HEK293T (cell line): ENCODE measurements at regions of chr10 and their contacts with region 1.

Region 1: DNA sequence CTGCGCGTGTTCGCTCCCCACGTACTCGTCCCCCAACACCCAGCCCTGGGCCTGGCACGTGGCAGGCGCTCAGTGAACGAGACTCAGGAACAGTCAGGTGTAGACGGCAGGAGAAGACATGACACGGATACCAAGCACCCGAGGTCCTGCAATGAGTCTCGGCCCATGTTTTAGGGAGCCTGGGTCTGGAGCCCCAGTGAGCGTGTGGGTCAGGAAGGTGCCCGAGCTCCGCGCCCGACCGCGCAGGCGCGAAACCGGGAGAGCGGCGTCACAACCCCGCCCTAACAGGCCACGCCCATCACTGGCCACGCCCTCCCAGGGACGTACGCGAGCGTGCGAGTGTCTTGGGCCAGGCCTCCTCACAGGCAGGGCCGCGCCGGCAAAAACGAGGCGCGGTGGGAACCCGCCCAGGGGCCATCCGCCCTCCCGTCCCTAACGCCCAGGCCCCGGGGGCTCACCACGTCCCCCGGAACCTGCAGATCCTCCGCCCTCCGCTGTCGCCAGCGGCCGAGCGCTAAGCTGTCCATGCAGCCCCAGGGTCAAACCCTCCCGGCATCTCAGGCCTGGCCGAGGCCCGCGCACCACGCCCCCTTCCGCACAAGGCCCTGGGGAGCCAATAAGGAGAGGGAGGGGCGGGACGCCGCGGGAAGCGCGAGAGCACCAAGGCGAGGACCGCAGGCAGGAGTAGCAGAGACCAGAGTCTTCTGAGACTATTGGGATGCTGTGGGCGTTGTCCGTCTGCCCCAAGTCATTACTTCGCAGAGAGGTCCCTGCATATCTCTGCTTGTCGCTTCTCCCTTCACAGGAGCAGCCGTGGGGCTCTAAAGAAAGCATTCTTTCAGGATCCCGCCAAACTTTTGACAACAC is at the start of gene C10orf143:
- DNase-seq: peak; percentile 97

Region 2: DNA sequence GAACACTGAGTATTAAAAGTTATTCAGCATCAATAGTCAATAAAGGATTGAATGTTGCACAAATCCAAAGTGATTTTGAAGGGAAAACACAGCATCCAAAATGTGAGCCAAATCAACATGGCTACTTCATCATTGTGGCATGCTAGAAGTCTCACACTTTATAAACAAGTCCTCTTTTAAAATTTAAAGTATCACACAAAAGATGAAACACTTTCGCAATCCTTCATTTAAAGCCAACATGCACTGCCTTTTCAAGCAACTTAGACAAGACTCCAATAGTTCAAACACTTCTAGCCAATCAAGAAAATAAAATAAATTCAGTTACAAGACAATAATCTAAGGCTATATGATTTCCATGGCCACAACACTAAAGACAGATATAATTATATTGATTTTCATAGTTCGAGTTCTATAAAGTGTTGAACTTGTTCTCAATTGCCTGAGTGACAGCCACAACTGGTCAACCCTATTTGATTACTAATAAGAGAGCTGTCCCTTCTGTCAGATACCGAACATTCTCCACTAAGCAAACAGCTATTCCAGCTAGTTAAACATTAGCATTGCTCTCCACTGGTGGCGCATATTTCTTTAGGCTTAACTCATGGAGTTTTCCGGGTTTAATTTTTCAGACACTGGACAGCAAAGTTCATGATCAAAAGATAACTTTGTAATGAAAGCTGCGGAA is 154.7 kb before region 1 on chr10:
- CTCF ChIA-PET with region 1: no interaction called
- POLR2A ChIA-PET with region 1: no interaction called
- DNase-seq: no peak

Region 3: DNA sequence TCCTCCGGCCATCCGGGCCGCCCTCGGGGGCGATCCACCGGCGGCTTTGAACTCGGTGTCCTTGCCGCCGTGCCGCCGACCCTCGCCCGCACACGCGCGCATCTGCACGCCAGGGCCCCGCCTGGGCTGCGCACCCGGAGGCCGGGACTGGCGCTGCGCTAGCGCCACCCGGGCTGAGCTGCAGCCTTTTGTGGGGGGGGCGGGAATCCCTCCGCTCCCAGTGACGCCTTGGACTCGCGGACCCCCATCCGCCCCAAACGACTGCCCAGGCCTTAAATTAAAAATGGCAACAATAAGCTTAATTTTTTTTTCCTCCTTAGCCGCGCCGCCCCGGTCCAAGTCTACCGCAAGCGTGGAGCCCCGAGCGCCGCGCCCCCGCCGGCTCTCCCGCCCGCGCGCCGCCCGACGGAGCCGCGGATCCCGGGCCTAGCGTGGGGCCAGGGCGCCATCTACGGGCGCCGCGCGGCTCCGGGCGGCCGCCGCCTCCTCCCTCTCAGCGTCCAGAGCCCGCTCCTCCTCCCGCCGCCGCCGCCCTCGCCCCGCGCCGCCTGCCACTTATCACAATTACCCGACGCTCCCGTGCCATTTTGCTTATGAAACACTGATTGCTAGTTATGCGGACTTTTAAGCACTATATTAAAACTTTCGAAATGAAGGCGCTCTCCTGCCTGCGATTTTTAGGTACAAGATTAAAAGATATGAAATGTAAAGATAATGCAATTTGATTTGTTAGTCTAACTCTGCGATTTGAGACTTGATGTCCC is 138.9 kb before region 1 on chr10:
- CTCF ChIA-PET with region 1: interaction called, 3 read pairs
- POLR2A ChIA-PET with region 1: interaction called, 20 read pairs
- DNase-seq: peak; percentile 89

Region 4: GRCh38 chr10:130079614-130080460 is 30.6 kb before region 1 on chr10:
- CTCF ChIA-PET with region 1: interaction called, 3 read pairs
- POLR2A ChIA-PET with region 1: interaction called, 16 read pairs
- DNase-seq: peak; percentile 33

Region 5: GRCh38 chr10:130099344-130099743 is 11.1 kb before region 1 on chr10:
- CTCF ChIA-PET with region 1: interaction called, 3 read pairs
- POLR2A ChIA-PET with region 1: interaction called, 10 read pairs
- DNase-seq: no peak

Region 6: GRCh38 chr10:130127364-130128061 is 17.0 kb after region 1 on chr10:
- CTCF ChIA-PET with region 1: interaction called, 4 read pairs
- POLR2A ChIA-PET with region 1: interaction called, 28 read pairs
- DNase-seq: peak; percentile 87

Region 7: DNA sequence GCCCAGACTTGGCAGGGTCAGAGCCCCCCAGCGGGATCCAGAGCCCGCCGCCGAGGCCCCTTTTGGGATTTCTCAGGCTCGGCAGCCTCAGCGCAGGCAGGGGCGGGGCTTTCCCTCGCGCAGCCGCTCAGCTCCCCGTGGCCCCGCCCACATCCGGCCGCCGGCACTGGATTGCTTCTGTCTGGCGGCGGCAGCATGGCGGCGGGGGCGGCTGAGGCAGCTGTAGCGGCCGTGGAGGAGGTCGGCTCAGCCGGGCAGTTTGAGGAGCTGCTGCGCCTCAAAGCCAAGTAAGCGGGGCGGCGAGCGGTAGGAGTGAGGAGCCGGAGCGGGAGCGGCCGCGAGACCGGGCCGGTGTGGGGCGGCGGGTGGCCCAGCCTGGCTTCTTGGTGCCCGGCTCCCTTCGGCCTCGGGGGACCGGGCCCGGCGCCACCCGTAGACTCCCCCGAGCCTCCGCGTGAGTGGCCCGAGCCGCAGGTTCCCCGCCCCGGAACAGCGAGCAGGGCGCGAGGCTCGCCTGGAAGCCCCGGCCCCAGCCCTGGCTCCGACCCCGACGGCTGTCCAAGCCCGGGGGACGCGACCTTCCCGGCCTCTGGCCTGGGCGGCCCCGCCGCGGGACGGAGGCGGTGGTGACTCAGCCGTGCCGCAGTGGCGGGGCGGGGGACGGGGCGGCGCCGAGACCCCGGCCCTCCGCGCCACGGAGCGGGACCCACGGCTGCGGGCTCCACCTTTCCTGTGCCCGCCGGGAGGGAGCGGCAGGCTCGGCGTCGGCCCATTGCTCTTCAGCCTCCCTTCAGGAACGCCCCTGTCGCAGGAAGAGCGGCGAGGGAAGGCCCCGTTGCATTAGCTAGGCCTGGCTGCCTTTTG is 26.0 kb after region 1 on chr10 and contains the start of gene GLRX3:
- CTCF ChIA-PET with region 1: interaction called, 6 read pairs
- POLR2A ChIA-PET with region 1: interaction called, 104 read pairs
- DNase-seq: peak; percentile 96

Region 8: GRCh38 chr10:130141878-130142277 is 31.4 kb after region 1 on chr10:
- CTCF ChIA-PET with region 1: interaction called, 6 read pairs
- POLR2A ChIA-PET with region 1: interaction called, 104 read pairs
- DNase-seq: no peak